ENCODE measurements at regions of chr16 and their contacts with region 1.

Region 1: GRCh38 chr16:74852500-74852875 is 77.9 kb upstream of the FA2H start:
- DNase-seq: no peak
- H3K4me3 Mint-ChIP-seq: no peak overlapping the region
- H3K27ac Mint-ChIP-seq: no peak overlapping the region
- H3K4me1 Mint-ChIP-seq: no peaks in the 10 kb centered on the region
- H3K27me3 Mint-ChIP-seq: no peaks in the 10 kb centered on the region

Region 2: GRCh38 chr16:74743668-74744299 is 108.7 kb before region 1 on chr16:
- CTCF ChIA-PET with region 1: no interaction called
- POLR2A ChIA-PET with region 1: no interaction called
- intact Hi-C with region 1: no loop called
- DNase-seq: no peak
- H3K4me3 Mint-ChIP-seq: no peak overlapping the region
- H3K27ac Mint-ChIP-seq: no peak overlapping the region
- H3K4me1 Mint-ChIP-seq: no peaks in the 10 kb centered on the region
- H3K27me3 Mint-ChIP-seq: peaks cover 3% of the 10 kb centered on the region

Region 3: DNA sequence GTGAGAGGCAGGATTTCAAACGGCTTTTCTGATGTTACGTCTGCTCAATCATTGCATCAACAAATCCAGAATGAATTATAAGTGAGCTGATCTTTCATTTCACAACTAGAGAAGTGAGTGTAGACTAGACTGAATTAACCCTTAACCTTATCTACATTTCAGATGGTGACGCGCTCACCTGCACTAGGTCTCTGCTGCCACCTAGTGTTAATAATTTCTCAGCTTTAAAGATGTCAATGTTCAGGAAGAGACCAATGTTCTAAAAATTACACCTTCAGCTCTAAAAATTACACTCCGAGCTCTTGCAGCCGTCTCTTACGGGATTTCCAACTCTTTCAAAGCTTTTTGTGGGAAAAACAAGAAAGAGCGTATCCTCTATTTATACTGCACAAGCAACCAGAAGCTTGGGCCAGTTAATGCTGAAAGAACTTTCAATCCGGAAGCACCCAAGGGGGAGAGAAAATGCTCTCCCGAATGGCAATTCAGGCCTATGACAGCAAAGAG is 10.3 kb after region 1 on chr16:
- CTCF ChIA-PET with region 1: interaction called, 13 read pairs
- POLR2A ChIA-PET with region 1: no interaction called
- intact Hi-C with region 1: no loop called
- DNase-seq: peak; percentile 29
- H3K4me3 Mint-ChIP-seq: no peak overlapping the region
- H3K27ac Mint-ChIP-seq: no peak overlapping the region
- H3K4me1 Mint-ChIP-seq: peaks cover 4% of the 10 kb centered on the region
- H3K27me3 Mint-ChIP-seq: no peaks in the 10 kb centered on the region

Region 4: DNA sequence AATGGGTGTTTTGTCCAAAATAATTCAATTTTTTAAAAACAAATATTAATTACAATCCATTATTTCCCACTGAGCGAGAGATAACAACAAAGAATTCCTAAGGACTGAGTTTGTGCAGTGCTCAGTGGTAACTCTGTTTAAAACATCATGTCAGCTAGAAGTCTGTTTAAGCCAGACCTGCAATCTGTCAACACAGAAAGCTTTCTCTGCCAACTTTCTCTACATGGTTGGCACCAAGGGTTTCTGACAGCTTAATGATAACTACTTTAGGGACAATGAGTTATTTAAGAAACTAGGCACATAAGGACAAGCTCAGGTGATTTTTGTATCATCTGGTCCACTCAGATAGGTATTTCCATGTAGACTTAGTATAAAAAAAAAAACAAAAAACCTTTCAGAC is 50.6 kb after region 1 on chr16:
- CTCF ChIA-PET with region 1: no interaction called
- POLR2A ChIA-PET with region 1: no interaction called
- intact Hi-C with region 1: no loop called
- DNase-seq: no peak
- H3K4me3 Mint-ChIP-seq: no peak overlapping the region
- H3K27ac Mint-ChIP-seq: no peak overlapping the region
- H3K4me1 Mint-ChIP-seq: no peaks in the 10 kb centered on the region
- H3K27me3 Mint-ChIP-seq: no peaks in the 10 kb centered on the region

Region 5: DNA sequence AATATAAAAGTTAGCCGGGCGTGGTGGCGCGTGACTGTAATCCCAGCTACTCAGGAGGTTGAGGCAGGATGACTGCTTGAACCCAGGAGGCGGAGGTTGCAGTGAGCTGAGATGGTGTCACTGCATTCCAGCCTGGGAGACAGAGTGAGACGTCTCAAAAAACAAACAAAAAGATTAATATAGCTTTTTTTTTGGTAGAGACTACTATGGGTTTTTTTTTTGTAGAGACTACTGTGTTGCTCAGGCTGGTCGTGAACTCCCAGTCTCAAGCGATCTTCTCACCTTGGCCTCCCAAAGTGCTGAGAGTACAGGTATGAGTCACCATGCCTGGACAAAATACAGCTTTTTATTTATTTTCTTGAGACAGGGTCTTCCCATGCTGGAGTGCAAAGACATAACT is 166.5 kb after region 1 on chr16:
- CTCF ChIA-PET with region 1: no interaction called
- POLR2A ChIA-PET with region 1: no interaction called
- intact Hi-C with region 1: no loop called
- DNase-seq: peak; percentile 17
- H3K4me3 Mint-ChIP-seq: no peak overlapping the region
- H3K27ac Mint-ChIP-seq: no peak overlapping the region
- H3K4me1 Mint-ChIP-seq: peaks cover 33% of the 10 kb centered on the region
- H3K27me3 Mint-ChIP-seq: no peaks in the 10 kb centered on the region

Measured in activated CD4-positive, alpha-beta memory T cell treated with anti-CD3 and anti-CD28 coated beads for 36 hours (primary cell).